ENCODE measurements at regions of chr12 and their contacts with region 1.

Region 1: DNA sequence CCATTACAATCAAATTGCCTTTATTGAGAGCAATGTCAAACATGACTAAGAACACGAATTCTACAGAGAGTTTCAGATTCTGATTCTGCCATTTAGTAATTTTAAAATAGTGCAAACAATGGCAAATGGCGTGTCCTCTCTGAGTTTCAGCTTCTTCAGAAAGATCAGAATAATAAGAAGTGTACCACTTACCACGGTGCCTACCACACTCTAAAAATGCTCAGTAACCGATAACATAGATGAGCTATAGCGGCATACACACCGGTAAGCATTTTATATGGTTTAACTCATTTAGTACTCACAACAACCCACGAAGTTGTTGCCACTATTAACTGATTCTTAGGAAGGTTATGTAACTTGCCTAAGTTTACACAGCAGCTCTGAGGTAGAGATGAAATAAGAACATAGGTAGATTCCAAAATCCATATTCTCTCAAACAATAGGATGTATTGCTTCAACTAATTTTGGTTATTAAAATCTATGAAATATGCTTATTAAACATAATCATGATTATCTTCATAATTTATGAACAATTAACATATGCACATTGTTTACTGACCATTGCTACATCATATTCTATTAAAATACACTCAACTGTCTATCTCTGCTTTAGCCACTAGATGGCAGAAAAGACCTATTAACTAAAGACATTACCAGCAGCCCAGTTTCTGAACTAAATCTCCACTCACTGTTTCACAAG is 38.3 kb downstream of the SLC6A15 start:
- DNase-seq: no peak
- ATAC-seq: peak in 2 of 8 donors; percentile 16 to 48
- H3K4me3 ChIP-seq: no peak overlapping the region
- H3K27ac ChIP-seq: no peak overlapping the region
- H3K4me1 ChIP-seq: no peaks in the 10 kb centered on the region
- H3K27me3 ChIP-seq: peaks cover 0 to 7% (median 0%) of the 10 kb centered on the region in 7 donors
- CTCF ChIP-seq: peak; percentile 46 to 83 (median 76)

Region 2: DNA sequence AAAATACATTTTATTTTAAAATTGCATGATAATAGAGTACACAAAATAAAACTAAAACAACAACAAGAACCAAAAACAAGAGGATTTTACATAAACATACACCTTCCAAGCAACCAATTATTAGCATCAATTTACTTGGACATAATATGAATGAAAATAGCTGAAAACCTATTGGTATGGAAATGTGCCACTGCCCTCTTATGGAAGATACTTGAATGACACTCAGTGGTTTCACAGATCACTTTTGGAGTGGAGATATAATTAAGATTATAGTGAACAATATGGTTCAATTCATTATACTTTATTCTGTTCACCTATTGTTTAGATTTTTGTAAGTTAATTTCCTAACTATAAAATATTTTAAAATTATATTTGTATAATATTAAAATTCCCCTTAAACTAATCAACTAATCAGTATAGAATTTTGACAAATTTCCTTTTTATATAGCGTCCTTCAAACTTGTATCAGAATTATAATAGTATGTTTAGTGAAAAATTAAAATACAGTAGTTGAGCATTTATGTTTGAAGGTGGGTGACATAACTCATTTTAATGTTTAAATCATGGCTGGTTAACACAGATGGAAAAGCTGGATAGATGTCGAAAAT is 31.8 kb before region 1 on chr12:
- intact Hi-C with region 1: no loop called
- DNase-seq: no peak
- ATAC-seq: no peak
- H3K4me3 ChIP-seq: no peak overlapping the region
- H3K27ac ChIP-seq: no peak overlapping the region
- H3K4me1 ChIP-seq: no peaks in the 10 kb centered on the region
- H3K27me3 ChIP-seq: no peaks in the 10 kb centered on the region
- CTCF ChIP-seq: peak; percentile 24 to 73 (median 64)

Region 3: DNA sequence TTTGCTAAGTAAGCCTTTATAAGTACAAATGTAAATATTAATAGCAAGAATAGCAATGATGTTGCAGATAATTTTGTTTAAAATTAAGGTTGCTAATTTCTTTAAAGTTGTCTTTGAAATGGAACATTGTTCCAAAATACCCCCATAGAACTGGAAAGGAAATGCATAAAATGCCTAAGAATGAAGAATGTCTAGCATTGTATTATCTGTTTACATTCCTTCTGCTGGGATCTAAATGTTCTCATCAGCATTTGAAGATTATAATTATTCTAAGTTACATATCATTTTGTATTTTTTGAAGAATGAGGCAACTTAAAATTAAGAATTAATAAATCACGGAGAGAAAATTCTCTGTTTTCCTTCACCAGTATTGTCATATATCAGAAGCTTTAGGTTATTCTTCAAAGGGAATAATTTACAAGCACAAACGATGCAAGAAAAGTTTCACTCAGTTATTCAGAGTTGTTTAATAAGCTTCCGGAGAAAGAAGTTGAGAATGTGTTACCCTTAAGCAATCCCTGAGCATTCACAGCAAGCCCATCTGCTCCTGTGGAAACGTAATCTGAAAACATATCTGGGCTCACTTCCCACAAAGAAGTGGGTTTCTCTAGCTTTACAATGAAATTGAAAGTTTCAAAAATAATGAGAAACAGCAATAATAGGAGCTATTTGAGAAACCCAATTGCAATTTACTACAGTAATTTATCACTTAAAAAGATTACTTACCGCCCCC is 17.0 kb after region 1 on chr12:
- intact Hi-C with region 1: no loop called
- DNase-seq: no peak
- ATAC-seq: no peak
- H3K4me3 ChIP-seq: no peak overlapping the region
- H3K27ac ChIP-seq: no peak overlapping the region
- H3K4me1 ChIP-seq: no peaks in the 10 kb centered on the region
- H3K27me3 ChIP-seq: peaks cover 0 to 7% (median 0%) of the 10 kb centered on the region in 7 donors
- CTCF ChIP-seq: no peak

Region 4: GRCh38 chr12:84912198-84913128 is 38.2 kb after region 1 on chr12 and contains the start of gene SLC6A15:
- intact Hi-C with region 1: no loop called
- DNase-seq: no peak
- ATAC-seq: peak in 3 of 8 donors; percentile 24 to 62 (median 35)
- H3K4me3 ChIP-seq: peak within 1 kb of the TSS in 8 of 10 donors; percentile 25 to 45 (median 38)
- H3K27ac ChIP-seq: no peak within 1 kb of the TSS
- H3K4me1 ChIP-seq: peaks cover 0 to 23% (median 9%) of the 10 kb centered on the region in 9 donors
- H3K27me3 ChIP-seq: peaks cover 0 to 78% (median 61%) of the 10 kb centered on the region in 7 donors
- CTCF ChIP-seq: no peak
- total RNA-seq, gene SLC6A15: not detected

Region 5: DNA sequence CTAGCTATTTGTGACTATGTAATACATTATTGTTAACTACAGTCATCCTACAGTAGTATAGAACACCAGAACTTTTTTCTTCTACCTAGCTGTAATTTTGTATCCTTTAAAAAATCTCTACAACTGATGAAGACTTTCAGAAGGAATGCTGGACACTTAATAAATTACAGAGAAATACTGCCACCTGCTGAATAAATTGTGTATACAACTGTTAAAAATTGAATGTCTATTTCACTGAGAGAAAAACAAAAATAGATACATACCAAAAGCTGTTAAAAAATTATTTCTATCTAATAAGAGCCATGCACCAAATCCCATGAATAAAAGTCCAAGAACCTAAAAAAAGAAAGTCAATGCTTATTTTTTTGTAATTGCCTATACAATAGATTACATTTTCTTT is 155.2 kb after region 1 on chr12:
- intact Hi-C with region 1: loop called (anchors 1 to 10 kb)
- DNase-seq: no peak
- ATAC-seq: no peak
- H3K4me3 ChIP-seq: no peak overlapping the region
- H3K27ac ChIP-seq: no peak overlapping the region
- H3K4me1 ChIP-seq: no peaks in the 10 kb centered on the region
- H3K27me3 ChIP-seq: peaks cover 0 to 5% (median 0%) of the 10 kb centered on the region in 7 donors
- CTCF ChIP-seq: peak; percentile 11 to 70 (median 53)

Region 6: GRCh38 chr12:85036241-85036707 is 162.0 kb after region 1 on chr12 and contains the starts of genes LRRIQ1 and TSPAN19:
- intact Hi-C with region 1: loop called in 3 of 10 experiments (anchors 2 to 10 kb)
- DNase-seq: peak in 1 of 2 donors; percentile 64
- ATAC-seq: peak; percentile 65 to 93 (median 86)
- H3K4me3 ChIP-seq: peak within 1 kb of the TSS; percentile 33 to 61 (median 54)
- H3K27ac ChIP-seq: no peak within 1 kb of the TSS
- H3K4me1 ChIP-seq: peaks cover 0 to 8% (median 0%) of the 10 kb centered on the region in 9 donors
- H3K27me3 ChIP-seq: peaks cover 0 to 25% (median 4%) of the 10 kb centered on the region in 7 donors
- CTCF ChIP-seq: no peak
- total RNA-seq, gene LRRIQ1: 0.04 to 0.79 (median 0.14) TPM in 9 of 10 donors, not detected in the other
- total RNA-seq, gene TSPAN19: 0.34 to 1.0 (median 0.47) TPM in 5 of 10 donors, not detected in the others

Region 7: DNA sequence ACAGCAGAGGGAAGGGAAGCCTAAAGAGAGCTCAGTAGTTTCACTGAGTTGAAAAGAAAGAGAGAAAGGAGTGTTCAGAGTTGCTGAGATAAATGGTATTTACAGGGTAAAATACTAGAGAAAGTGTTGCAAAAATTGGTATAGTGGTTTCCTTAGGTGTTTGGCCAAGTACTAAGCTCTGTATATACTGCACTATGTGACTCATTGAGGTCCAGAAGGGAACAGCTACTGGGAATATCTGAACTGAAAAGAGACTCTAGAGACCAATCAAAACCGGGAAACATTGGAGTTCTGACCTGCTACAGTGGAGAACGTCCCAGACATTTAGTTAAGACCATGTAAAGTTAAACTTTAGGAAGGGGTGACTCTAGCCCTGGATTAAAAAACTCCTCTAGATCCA is 363.0 kb after region 1 on chr12:
- intact Hi-C with region 1: no loop called
- DNase-seq: no peak
- ATAC-seq: no peak
- H3K4me3 ChIP-seq: no peak overlapping the region
- H3K27ac ChIP-seq: no peak overlapping the region
- H3K4me1 ChIP-seq: no peaks in the 10 kb centered on the region
- H3K27me3 ChIP-seq: no peaks in the 10 kb centered on the region
- CTCF ChIP-seq: no peak